PC-3 (cell line): ENCODE measurements at regions of chr18 and their contacts with region 1.

Region 1: GRCh38 chr18:45879681-45880655 is 54.5 kb downstream of the SIGLEC15 start:
- DNase-seq: peak; percentile 67
- ATAC-seq: peak; percentile 89
- H3K4me3 ChIP-seq: no peak overlapping the region
- H3K27ac ChIP-seq: no peak overlapping the region
- H3K4me1 ChIP-seq: no peaks in the 10 kb centered on the region
- H3K27me3 ChIP-seq: no peaks in the 10 kb centered on the region
- CTCF ChIP-seq: peak; percentile 79

Region 2: DNA sequence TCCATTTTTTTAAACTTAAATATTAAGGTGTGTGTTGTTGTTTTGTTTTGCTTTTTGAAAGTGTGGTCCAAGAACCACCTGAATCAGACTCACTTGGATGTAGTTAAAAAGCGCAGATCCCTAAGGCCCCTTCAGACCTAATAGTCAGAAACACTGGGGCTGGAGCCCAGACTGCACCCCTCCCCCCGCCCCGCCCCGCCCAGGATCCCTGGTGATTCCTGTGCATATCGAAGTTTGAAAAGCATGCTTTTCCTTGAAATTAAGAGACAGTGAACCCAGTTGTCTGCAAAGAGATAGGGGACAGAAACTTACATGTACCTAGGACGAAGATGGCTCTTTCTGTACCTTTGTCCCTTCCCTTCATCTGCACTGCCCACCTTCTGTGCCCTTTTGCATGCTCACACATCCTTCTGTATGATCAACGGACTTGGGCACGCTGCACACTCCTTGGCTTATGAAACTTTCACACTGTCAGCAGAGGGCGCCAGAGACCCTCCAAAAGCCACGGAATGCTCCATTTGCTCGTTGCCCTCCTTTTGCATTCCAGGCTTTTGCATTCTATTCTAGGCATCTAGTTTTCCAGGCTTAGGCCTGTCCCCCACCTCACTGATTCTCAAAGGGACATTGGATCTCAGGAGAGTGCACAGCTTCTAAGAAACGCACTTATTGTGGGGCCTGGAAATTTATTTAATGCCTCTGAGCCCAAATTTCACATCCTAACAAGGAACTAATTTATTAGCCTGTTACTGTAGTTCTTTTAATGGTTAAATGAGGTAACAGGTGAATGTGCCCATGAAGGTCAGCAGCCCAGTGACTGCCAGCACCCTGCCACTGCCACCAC is 188.8 kb before region 1 on chr18:
- CTCF ChIA-PET with region 1: no interaction called
- POLR2A ChIA-PET with region 1: no interaction called
- intact Hi-C with region 1: loop called (anchors 1 kb)
- DNase-seq: peak; percentile 78
- ATAC-seq: peak; percentile 98
- H3K4me3 ChIP-seq: no peak overlapping the region
- H3K27ac ChIP-seq: no peak overlapping the region
- H3K4me1 ChIP-seq: peaks cover 5% of the 10 kb centered on the region; the same call in 1 of the 2 replicates
- H3K27me3 ChIP-seq: no peaks in the 10 kb centered on the region
- CTCF ChIP-seq: peak; percentile 71

Region 3: DNA sequence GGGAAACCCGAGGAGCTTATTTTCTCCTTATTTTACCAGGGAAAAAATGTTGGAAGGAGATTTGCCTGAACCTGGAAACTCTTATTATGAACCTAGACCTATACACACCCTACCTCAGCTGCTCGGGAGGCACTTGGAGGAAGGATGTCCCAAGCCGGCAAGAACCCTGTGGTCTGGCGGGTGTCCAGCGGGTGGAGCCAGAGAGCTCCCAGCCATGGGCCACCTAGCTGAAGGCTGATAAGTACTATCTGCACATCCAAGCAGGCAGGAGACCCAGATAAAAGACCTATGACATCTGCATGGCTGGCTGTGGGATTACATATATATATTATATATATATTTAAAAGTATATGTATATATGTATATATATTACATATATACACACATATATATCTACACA is 157.1 kb before region 1 on chr18:
- CTCF ChIA-PET with region 1: no interaction called
- POLR2A ChIA-PET with region 1: no interaction called
- intact Hi-C with region 1: loop called (anchors 1 kb)
- DNase-seq: peak; percentile 64
- ATAC-seq: peak; percentile 92
- H3K4me3 ChIP-seq: no peak overlapping the region
- H3K27ac ChIP-seq: no peak overlapping the region
- H3K4me1 ChIP-seq: peaks cover 7% of the 10 kb centered on the region; the same call in 1 of the 2 replicates
- H3K27me3 ChIP-seq: no peaks in the 10 kb centered on the region
- CTCF ChIP-seq: peak; percentile 53

Region 4: DNA sequence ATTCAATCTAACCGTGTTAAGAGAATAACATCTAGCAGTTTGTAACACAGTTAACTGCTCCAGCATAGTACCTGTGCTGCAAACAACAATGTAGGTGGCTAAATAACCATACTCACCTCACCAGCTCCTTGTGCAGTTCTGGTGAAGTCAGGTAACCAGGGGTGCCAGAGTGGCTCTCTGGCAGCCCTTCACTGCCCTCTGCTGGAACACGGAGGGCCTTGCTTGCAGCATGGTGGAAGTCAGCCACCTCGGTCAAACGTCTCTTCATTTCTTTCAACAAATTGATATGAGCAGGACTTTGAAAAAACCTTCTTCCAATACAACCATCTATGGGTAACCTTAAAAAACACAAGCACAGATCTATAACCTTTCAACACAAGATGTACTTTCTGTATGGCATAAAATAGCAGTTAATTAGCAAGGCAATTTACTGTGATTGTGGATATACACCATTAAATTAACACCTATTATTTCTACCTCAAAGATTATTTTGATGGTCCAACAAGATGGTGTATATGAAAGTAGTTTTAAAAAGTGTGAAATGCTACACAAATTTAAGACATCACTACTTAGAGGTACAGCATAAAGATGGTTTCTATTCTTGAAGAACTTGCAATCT is 30.5 kb after region 1 on chr18:
- CTCF ChIA-PET with region 1: no interaction called
- POLR2A ChIA-PET with region 1: no interaction called
- intact Hi-C with region 1: no loop called
- DNase-seq: peak; percentile 61
- ATAC-seq: peak; percentile 79
- H3K4me3 ChIP-seq: no peak overlapping the region
- H3K27ac ChIP-seq: no peak overlapping the region
- H3K4me1 ChIP-seq: no peaks in the 10 kb centered on the region
- H3K27me3 ChIP-seq: no peaks in the 10 kb centered on the region
- CTCF ChIP-seq: peak; percentile 70